Endothelial cell of umbilical vein (primary cell): ENCODE measurements at regions of chr1 and their contacts with region 1.

Region 1: GRCh38 chr1:20194757-20195461 is 8.6 kb upstream of the PLA2G2C start:
- DNase-seq: peak; percentile 57
- H3K4me3 ChIP-seq: no peak overlapping the region
- H3K27ac ChIP-seq: no peak overlapping the region
- H3K4me1 ChIP-seq: no peaks in the 10 kb centered on the region
- H3K27me3 ChIP-seq: peaks cover 7 to 13% of the 10 kb centered on the region in 2 experiments
- CTCF ChIP-seq: peak; percentile 84 to 89
- POLR2A ChIP-seq: no peak

Region 2: GRCh38 chr1:19918057-19918456 is 276.9 kb before region 1 on chr1:
- CTCF ChIA-PET with region 1: interaction called, 85 read pairs
- POLR2A ChIA-PET with region 1: no interaction called
- dilution Hi-C with region 1: no loop called
- intact Hi-C with region 1: loop called (anchors 1 kb)
- DNase-seq: peak; percentile 72
- H3K4me3 ChIP-seq: no peak overlapping the region
- H3K27ac ChIP-seq: no peak overlapping the region
- H3K4me1 ChIP-seq: no peaks in the 10 kb centered on the region
- H3K27me3 ChIP-seq: no peaks in the 10 kb centered on the region
- CTCF ChIP-seq: peak; percentile 85 to 87
- POLR2A ChIP-seq: no peak

Region 3: GRCh38 chr1:20100632-20101355 is 94.1 kb before region 1 on chr1:
- CTCF ChIA-PET with region 1: interaction called, 32 read pairs
- POLR2A ChIA-PET with region 1: no interaction called
- dilution Hi-C with region 1: no loop called
- intact Hi-C with region 1: loop called (anchors 1 kb)
- DNase-seq: peak; percentile 43
- H3K4me3 ChIP-seq: no peak overlapping the region
- H3K27ac ChIP-seq: no peak overlapping the region
- H3K4me1 ChIP-seq: no peaks in the 10 kb centered on the region
- H3K27me3 ChIP-seq: peaks cover 0 to 2% of the 10 kb centered on the region in 2 experiments
- CTCF ChIP-seq: peak; percentile 59 to 71
- POLR2A ChIP-seq: no peak

Region 4: DNA sequence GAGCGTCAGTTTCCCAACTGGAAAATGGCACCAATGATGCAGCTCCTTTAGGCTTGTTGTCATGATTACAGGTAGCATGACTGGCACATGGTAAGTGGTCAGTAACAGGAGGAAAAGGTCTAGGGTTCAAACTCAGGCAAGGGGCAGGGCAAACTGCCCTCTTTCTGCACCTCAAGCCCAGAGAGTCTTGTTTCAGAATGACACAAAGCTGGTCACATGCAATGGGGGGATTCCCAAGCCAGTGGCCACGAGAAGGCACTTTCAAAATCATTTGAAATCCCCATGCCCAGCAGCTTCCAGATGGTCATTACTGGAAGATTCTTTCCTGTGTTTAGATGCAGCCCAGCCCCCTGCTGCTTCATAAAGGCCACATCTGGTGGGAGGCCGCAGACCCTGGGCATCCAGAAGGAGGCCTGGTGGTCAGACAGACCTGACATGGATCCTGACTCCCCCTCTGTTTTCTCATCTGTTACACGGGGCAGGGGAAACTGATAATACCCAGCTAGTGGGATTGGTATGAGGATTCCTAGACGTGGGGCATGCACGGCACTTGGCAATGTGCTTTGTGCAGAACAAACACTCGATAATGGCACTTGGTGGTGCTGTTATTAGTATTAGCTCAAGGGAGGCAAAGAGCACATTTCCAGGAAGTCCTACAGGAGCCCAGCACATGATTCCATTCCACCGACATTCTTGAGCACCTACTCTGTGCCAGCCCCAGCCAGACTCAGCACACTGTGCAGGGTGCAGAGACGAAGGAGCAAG is 68.7 kb before region 1 on chr1:
- CTCF ChIA-PET with region 1: no interaction called
- POLR2A ChIA-PET with region 1: no interaction called
- dilution Hi-C with region 1: no loop called
- intact Hi-C with region 1: no loop called
- DNase-seq: no peak
- H3K4me3 ChIP-seq: no peak overlapping the region
- H3K27ac ChIP-seq: no peak overlapping the region
- H3K4me1 ChIP-seq: no peaks in the 10 kb centered on the region
- H3K27me3 ChIP-seq: peaks cover 0 to 3% of the 10 kb centered on the region in 2 experiments
- CTCF ChIP-seq: no peak
- POLR2A ChIP-seq: no peak

Region 5: DNA sequence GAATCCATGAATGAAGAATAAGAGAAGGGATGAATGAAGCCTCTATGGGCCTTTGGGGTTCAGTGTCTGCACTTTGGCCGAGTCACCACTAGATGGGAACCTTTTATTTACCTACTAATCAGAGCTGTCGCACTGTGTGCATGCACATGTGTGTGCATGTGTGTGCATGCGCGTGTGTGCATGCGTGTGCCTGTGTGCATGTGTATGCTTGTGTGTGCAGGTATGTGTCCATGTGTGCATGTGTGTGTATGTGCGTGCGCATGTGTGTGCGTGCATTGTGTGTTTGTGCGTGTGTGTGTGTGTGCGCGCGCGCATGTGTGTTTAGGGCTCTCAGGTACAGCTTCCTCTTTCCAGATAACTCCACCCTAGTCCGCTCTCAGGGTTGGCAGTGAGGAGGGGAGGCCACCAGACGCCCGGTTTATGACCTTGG is 29.4 kb before region 1 on chr1:
- CTCF ChIA-PET with region 1: interaction called, 65 read pairs
- POLR2A ChIA-PET with region 1: no interaction called
- dilution Hi-C with region 1: no loop called
- intact Hi-C with region 1: loop called (anchors 1 kb)
- DNase-seq: no peak
- H3K4me3 ChIP-seq: no peak overlapping the region
- H3K27ac ChIP-seq: no peak overlapping the region
- H3K4me1 ChIP-seq: no peaks in the 10 kb centered on the region
- H3K27me3 ChIP-seq: no peaks in the 10 kb centered on the region
- CTCF ChIP-seq: peak in 1 of 2 donors; percentile 11
- POLR2A ChIP-seq: no peak

Region 6: DNA sequence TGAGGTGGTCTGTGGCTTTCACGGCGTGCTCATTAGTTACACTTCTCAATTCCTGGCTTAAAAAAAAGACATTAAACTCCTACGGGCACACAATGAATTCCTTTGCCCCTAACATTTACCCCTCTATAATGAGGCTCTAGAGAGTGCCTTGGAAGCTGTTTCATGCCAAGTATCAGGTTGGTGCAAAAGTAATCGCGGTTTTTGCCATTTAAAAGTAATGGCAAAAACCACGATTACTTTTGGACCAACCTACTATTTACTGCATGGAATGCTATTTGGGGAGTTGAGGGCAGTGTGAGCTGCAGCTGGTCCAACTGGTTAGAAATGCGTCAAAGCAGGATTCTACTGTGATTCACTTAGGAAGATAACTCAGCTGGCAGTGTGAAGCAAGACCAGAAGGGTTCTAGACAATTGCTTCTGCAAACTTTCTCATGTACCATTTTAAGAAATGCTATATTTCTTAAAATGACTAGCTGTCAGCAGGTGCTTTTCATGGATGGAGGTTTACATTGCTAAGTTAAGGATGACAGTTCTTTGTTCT is 12.6 kb after region 1 on chr1:
- CTCF ChIA-PET with region 1: interaction called, 24 read pairs
- POLR2A ChIA-PET with region 1: no interaction called
- dilution Hi-C with region 1: no loop called
- intact Hi-C with region 1: no loop called
- DNase-seq: no peak
- H3K4me3 ChIP-seq: no peak overlapping the region
- H3K27ac ChIP-seq: no peak overlapping the region
- H3K4me1 ChIP-seq: no peaks in the 10 kb centered on the region
- H3K27me3 ChIP-seq: peaks cover 0 to 7% of the 10 kb centered on the region in 2 experiments
- CTCF ChIP-seq: no peak
- POLR2A ChIP-seq: no peak